GM10248 (cell line): ENCODE measurements at regions of chr7 and their contacts with region 1.

Region 1: GRCh38 chr7:106947244-106947728 is 82.2 kb downstream of the PIK3CG start:
- DNase-seq: peak; percentile 52
- CTCF ChIP-seq: peak; percentile 36

Region 2: DNA sequence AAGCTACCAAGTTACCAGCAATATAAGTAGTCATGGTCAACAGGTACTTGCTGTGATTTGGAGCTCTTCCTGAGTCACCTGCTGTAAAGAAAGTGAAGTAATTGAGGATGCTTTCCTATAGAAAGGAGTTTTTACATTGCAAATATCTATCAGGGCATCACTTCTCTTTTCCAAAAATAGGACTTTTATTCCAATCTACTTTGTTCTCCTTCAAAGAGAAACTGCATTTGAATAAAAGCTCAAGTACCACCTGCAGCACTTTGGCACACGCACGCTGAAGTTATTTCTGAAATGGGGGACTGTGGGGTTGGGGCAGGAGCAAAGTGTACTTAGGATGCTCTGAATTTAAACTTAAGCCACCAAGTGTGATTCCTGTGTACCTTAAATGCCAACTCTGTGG is 15.5 kb after region 1 on chr7:
- CTCF ChIA-PET with region 1: interaction called, 10 read pairs
- POLR2A ChIA-PET with region 1: no interaction called
- DNase-seq: no peak
- CTCF ChIP-seq: no peak